Esophagus muscularis mucosa (tissue), 4 donors: ENCODE measurements at regions of chr4 and their contacts with region 1.

Region 1: GRCh38 chr4:174764105-174764729 is 64.8 kb downstream of the GLRA3 start:
- DNase-seq: no peak
- H3K4me3 ChIP-seq: no peak overlapping the region
- H3K27ac ChIP-seq: no peak overlapping the region
- H3K4me1 ChIP-seq: no peaks in the 10 kb centered on the region
- H3K27me3 ChIP-seq: peaks cover 0 to 4% (median 0%) of the 10 kb centered on the region in 4 donors
- CTCF ChIP-seq: peak; percentile 20 to 57 (median 34)
- EP300 ChIP-seq: no peak
- POLR2A ChIP-seq: no peak

Region 2: DNA sequence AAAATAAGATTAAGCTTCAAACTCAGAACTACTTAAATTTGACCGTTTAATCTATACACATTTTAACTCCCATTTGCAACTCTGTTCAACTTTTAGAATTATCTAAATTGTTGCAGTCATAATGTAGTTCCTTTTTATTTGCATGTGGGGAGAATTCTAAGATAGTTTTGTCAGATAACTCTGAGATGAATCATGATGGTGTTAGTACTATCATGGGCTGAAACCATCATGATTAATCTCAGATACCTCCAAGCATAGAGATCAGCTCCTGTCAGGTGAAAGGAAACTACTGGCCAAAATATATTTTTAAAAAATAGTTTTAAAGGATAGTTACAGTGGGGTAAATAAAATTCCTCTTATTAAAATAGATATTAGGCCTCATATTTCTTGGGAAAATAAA is 519.8 kb before region 1 on chr4:
- intact Hi-C with region 1: no loop called
- DNase-seq: no peak
- H3K4me3 ChIP-seq: no peak overlapping the region
- H3K27ac ChIP-seq: no peak overlapping the region
- H3K4me1 ChIP-seq: peaks cover 0 to 7% (median 3%) of the 10 kb centered on the region in 4 donors
- H3K27me3 ChIP-seq: no peaks in the 10 kb centered on the region
- CTCF ChIP-seq: no peak
- EP300 ChIP-seq: no peak
- POLR2A ChIP-seq: no peak

Region 3: DNA sequence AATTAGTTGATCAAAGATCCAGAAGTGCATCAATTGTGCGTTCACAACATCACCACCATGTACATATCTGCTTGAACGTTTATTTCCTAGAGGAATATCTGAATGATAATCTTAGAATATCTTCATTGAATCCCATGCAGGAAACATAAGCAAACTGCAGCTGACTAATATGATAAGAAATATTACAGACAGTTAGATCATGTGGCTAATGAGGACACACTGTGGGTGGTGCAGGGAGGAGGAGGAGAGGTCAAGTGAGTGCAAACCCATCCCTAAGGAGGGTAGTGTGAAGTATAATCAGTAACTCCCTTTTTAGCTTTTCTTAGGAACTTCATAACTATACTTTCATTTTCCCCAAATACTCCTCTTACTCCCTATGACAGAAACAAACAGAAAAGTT is 183.6 kb before region 1 on chr4:
- intact Hi-C with region 1: no loop called
- DNase-seq: no peak
- H3K4me3 ChIP-seq: no peak overlapping the region
- H3K27ac ChIP-seq: no peak overlapping the region
- H3K4me1 ChIP-seq: no peaks in the 10 kb centered on the region
- H3K27me3 ChIP-seq: no peaks in the 10 kb centered on the region
- CTCF ChIP-seq: no peak
- EP300 ChIP-seq: no peak
- POLR2A ChIP-seq: no peak

Region 4: GRCh38 chr4:175536852-175537453 is 772.7 kb after region 1 on chr4:
- intact Hi-C with region 1: loop called (anchors 10 kb)
- DNase-seq: no peak
- H3K4me3 ChIP-seq: no peak overlapping the region
- H3K27ac ChIP-seq: no peak overlapping the region
- H3K4me1 ChIP-seq: no peaks in the 10 kb centered on the region
- H3K27me3 ChIP-seq: no peaks in the 10 kb centered on the region
- CTCF ChIP-seq: peak; percentile 34 to 53 (median 52)
- EP300 ChIP-seq: no peak
- POLR2A ChIP-seq: no peak